A549 (cell line): ENCODE measurements at regions of chr12 and their contacts with region 1.

Region 1: GRCh38 chr12:95003213-95003920 is at the start of gene NDUFA12:
- DNase-seq: peak; percentile 87 to 98
- ATAC-seq: peak; percentile 99 to 100
- H3K4me3 ChIP-seq: peak within 1 kb of the TSS; percentile 67
- H3K27ac ChIP-seq: peak within 1 kb of the TSS; percentile 84 to 95
- H3K4me1 ChIP-seq: no peaks in the 10 kb centered on the region; the same call in 2 of the 3 replicates
- CTCF ChIP-seq: no peak
- EP300 ChIP-seq: no peak
- POLR2A ChIP-seq: peak; percentile 95
- RAD21 ChIP-seq: no peak; a peak in 1 of 5 replicates
- polyA plus RNA-seq, gene NDUFA12: 257 and 260 TPM in 2 replicates

Region 2: GRCh38 chr12:94988471-94988870 is 14.9 kb before region 1 on chr12:
- CTCF ChIA-PET with region 1: interaction called, 5 read pairs
- POLR2A ChIA-PET with region 1: interaction called, 10 read pairs
- DNase-seq: no peak
- ATAC-seq: no peak
- H3K4me3 ChIP-seq: no peak overlapping the region
- H3K27ac ChIP-seq: no peak overlapping the region
- H3K4me1 ChIP-seq: no peaks in the 10 kb centered on the region
- CTCF ChIP-seq: no peak
- EP300 ChIP-seq: no peak
- POLR2A ChIP-seq: no peak
- RAD21 ChIP-seq: no peak

Region 3: GRCh38 chr12:95022477-95022876 is 19.1 kb after region 1 on chr12:
- CTCF ChIA-PET with region 1: no interaction called
- POLR2A ChIA-PET with region 1: no interaction called
- DNase-seq: no peak
- ATAC-seq: peak in 1 of 2 experiments; percentile 38; a peak in 2 of 6 replicates
- H3K4me3 ChIP-seq: no peak overlapping the region
- H3K27ac ChIP-seq: no peak overlapping the region
- H3K4me1 ChIP-seq: no peaks in the 10 kb centered on the region
- CTCF ChIP-seq: no peak
- EP300 ChIP-seq: no peak
- POLR2A ChIP-seq: no peak
- RAD21 ChIP-seq: no peak